ENCODE measurements at regions of chr9 and their contacts with region 1.

Region 1: GRCh38 chr9:806285-807156 is 35.0 kb upstream of the DMRT1 start:
- DNase-seq: no peak
- ATAC-seq: peak in 1 of 4 donors; percentile 47
- H3K4me3 ChIP-seq: no peak overlapping the region
- H3K27ac ChIP-seq: no peak overlapping the region
- H3K4me1 ChIP-seq: no peaks in the 10 kb centered on the region
- H3K27me3 ChIP-seq: peaks cover 0 to 6% (median 0%) of the 10 kb centered on the region in 9 donors
- CTCF ChIP-seq: peak; percentile 53 to 78 (median 64)
- POLR2A ChIP-seq: no peak

Region 2: DNA sequence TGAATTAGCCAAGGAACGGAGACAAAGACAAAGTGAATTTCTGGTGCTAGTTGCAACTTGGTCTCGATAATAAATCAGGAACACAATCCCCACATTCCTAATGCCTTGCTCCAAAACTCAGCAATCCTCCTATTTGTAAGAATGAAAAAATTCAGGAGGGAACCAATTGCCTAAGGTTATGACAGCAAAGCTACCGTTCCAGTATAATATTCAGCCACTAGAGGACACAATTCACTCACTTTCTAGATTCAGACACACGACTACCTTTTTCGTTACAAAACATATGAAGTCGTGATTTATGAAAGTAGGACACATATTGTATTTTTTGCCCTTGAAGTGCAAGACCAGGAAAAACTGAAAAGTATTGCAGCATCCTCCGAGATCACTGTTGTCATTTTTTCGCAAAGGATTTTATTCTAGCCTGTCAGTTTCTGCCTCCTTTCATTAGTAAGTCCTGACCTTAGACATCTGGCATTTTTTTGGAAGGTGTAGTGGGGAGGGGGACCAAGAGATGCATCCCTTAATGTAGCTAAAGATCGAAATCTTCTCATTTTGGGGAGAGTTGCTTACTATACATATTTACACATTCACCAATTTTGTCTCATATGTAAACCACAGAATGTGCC is 458.7 kb before region 1 on chr9:
- intact Hi-C with region 1: loop called in 1 of 10 experiments (anchors 5 kb)
- DNase-seq: no peak
- ATAC-seq: peak in 2 of 4 donors; percentile 37 to 59
- H3K4me3 ChIP-seq: no peak overlapping the region
- H3K27ac ChIP-seq: no peak overlapping the region
- H3K4me1 ChIP-seq: peaks cover 0 to under 1% (median 0%) of the 10 kb centered on the region in 12 donors
- H3K27me3 ChIP-seq: peaks cover 0 to 15% (median 0%) of the 10 kb centered on the region in 9 donors
- CTCF ChIP-seq: peak; percentile 47 to 78 (median 68)
- POLR2A ChIP-seq: no peak

Region 3: DNA sequence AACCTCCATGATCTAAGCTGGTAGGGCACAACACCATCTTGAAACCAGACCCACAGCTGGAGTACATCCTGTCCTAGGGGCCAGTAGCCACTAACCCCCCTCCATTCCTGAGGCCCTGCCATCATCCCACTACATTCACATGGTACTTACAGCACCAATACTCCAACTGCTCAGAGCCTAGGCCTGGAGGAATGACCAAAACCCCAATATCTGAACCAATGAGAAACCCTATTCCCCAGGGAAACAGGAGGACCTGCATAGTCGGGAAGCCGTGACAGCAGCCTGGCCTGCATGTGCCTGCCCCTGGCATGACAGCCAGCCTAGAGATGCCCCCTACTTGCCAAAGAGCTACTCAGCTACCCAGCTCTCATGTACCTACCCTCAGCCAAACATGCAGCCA is 30.4 kb before region 1 on chr9:
- intact Hi-C with region 1: no loop called
- DNase-seq: no peak
- ATAC-seq: peak in 1 of 4 donors; percentile 31
- H3K4me3 ChIP-seq: no peak overlapping the region
- H3K27ac ChIP-seq: no peak overlapping the region
- H3K4me1 ChIP-seq: no peaks in the 10 kb centered on the region
- H3K27me3 ChIP-seq: no peaks in the 10 kb centered on the region
- CTCF ChIP-seq: no peak
- POLR2A ChIP-seq: no peak